ENCODE measurements at regions of chr1 and their contacts with region 1.

Region 1: DNA sequence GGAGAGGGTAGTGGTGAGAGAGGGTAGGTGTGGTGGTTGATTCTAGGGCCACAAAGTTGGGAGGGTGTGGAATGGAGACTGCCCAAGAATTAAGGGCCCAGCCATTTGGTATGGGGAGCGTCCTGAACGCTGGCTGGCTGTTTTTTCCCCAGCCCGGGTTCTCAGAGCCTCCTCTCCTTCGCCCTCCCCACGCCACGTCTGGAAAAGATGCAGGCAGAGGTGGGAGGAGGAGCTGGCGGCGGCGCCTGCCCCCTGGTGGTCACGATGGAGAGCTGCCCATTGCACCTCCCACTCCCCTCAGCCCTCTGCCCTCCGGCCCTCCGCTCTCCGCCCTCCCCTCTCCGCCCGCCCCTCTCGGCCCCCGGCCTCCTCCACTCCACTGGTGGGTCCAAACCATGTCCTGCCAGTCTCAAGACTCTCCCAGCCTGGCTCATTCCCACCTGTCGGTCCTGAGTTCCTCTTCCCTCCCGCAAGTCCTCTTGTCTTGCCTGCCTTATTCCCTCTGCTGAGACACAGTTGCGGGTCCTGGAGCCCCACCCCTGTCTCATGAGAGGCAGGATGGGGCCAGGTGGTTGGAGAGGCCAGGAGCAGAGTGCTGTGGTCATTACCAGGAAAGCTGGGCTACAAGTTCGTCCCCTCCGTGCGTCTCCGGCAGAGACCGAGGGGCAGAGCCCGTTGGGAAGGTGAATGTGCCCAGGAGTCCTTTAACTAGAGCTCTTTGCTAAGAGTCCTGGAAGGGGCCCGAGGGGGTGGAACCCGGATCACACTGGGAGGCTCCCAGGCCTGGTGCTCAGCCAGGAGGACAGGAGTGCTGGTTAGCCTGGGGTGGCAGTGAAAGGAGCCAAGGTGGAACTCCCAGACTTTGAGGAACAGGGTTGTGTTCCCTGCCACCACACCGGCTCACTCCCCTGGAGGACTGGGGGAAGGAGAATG is 22.6 kb downstream of the ETNK2 start:
- DNase-seq: no peak
- ATAC-seq: peak; percentile 93
- H3K4me3 ChIP-seq: no peak overlapping the region
- H3K27ac ChIP-seq: no peak overlapping the region
- H3K4me1 ChIP-seq: no peaks in the 10 kb centered on the region
- H3K27me3 ChIP-seq: no peaks in the 10 kb centered on the region; a peak in 1 of 4 replicates
- CTCF ChIP-seq: peak; percentile 66 to 90 (median 82)
- EP300 ChIP-seq: no peak
- POLR2A ChIP-seq: no peak
- RAD21 ChIP-seq: peak; percentile 64

Region 2: DNA sequence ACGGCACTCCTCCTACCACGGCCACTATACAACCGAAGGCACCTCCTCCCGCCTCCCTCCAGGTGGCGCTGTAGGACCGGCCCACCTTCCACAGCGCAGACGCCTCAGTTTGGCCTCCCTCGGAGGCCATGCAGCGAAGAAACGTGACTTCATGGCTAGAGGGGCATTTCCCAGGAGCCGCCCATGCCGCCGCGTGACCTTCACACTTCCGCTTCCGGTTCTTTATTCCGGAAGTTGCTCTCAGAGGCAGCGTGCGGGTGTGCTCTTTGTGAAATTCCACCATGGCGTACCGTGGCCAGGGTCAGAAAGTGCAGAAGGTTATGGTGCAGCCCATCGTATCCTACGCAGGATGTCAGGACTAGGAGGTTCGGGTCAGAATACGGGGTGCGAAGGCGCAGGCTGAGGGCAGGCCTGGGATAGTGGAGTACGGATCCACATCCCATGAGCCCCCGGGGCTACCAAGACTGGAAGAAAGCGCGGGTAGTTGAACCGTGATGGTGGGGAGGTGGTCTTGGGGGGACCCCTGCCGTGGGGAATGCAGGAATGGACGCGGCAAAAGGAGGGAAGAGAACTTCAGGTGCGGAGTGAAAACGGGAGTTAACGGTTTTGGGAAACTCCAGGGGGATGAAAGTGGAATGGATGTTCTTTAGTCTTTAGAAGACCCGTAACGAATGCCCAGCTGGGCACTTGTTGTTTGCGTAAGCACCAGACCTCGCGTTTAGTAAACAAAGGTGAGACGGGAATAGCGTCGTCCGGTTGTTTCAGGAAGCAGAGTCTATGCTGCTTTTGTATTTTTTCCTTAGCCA is 267.6 kb before region 1 on chr1 and contains the start of gene SNRPE:
- CTCF ChIA-PET with region 1: interaction called, 121 read pairs
- POLR2A ChIA-PET with region 1: no interaction called
- RAD21 ChIA-PET with region 1: interaction called, 54 read pairs
- SMC1A ChIA-PET with region 1: interaction called, 37 read pairs
- in situ Hi-C with region 1: loop called (anchors 5 kb)
- intact Hi-C with region 1: loop called (anchors 1 kb)
- DNase-seq: peak; percentile 92
- ATAC-seq: peak; percentile 97
- H3K4me3 ChIP-seq: peak within 1 kb of the TSS; percentile 80
- H3K27ac ChIP-seq: peak within 1 kb of the TSS; percentile 94
- H3K4me1 ChIP-seq: peaks cover 4% of the 10 kb centered on the region; the same call in 1 of the 2 replicates
- H3K27me3 ChIP-seq: no peaks in the 10 kb centered on the region
- CTCF ChIP-seq: peak; percentile 94 to 96 (median 94)
- EP300 ChIP-seq: no peak
- POLR2A ChIP-seq: peak; percentile 97
- RAD21 ChIP-seq: peak; percentile 89
- polyA plus RNA-seq, gene SNRPE: 1,331 to 1,384 TPM

Region 3: DNA sequence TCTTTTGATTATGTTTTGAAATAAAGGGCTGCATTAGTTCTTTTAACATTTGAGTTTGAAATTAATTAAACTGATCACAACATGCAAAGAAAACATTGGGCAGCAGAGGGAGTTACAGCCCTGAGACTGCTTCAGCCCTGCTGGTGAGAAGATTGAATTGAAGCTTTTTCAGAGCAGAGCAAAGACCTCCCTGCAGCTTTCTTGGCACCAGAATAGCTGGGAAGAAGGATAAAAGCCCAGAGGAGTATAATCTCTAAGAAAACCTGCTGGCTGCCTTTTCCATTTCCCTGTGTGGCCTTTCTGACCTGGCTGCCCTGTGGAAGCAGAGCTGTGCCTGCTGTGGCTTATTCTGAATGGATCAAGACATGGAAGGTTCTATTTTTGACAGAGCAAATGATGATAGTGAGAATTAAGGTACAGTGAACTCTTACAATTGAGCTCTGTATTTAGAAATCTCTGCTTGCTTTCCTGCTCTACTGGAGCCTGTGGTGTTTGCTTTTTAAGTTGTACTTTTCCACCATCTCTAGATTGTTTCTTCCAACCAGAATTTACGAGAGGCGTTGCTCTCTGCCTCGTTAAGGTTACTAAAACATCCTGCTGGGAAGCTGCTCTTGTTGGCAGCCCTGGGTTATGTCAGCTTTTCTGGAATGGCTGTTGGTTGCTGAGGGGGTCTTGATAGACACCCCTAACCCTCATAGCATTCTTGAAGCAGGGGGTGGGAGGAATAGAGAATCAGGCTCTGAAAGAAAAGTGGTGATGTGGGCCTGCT is 257.9 kb before region 1 on chr1:
- CTCF ChIA-PET with region 1: interaction called, 102 read pairs
- POLR2A ChIA-PET with region 1: interaction called, 4 read pairs
- RAD21 ChIA-PET with region 1: interaction called, 42 read pairs
- SMC1A ChIA-PET with region 1: interaction called, 55 read pairs
- in situ Hi-C with region 1: no loop called
- intact Hi-C with region 1: no loop called
- DNase-seq: no peak
- ATAC-seq: peak; percentile 88
- H3K4me3 ChIP-seq: no peak overlapping the region
- H3K27ac ChIP-seq: no peak overlapping the region
- H3K4me1 ChIP-seq: no peaks in the 10 kb centered on the region
- H3K27me3 ChIP-seq: no peaks in the 10 kb centered on the region
- CTCF ChIP-seq: peak; percentile 64 to 67 (median 67)
- EP300 ChIP-seq: no peak
- POLR2A ChIP-seq: no peak
- RAD21 ChIP-seq: peak; percentile 56

Region 4: GRCh38 chr1:204089044-204089751 is 40.0 kb before region 1 on chr1:
- CTCF ChIA-PET with region 1: interaction called, 6 read pairs
- POLR2A ChIA-PET with region 1: no interaction called
- RAD21 ChIA-PET with region 1: interaction called, 12 read pairs
- SMC1A ChIA-PET with region 1: no interaction called
- in situ Hi-C with region 1: no loop called
- intact Hi-C with region 1: no loop called
- DNase-seq: no peak
- ATAC-seq: no peak
- H3K4me3 ChIP-seq: no peak overlapping the region
- H3K27ac ChIP-seq: no peak overlapping the region
- H3K4me1 ChIP-seq: no peaks in the 10 kb centered on the region
- H3K27me3 ChIP-seq: no peaks in the 10 kb centered on the region; a peak in 1 of 4 replicates
- CTCF ChIP-seq: no peak
- EP300 ChIP-seq: no peak
- POLR2A ChIP-seq: no peak
- RAD21 ChIP-seq: no peak

Region 5: GRCh38 chr1:204114606-204115005 is 14.6 kb before region 1 on chr1:
- CTCF ChIA-PET with region 1: interaction called, 10 read pairs
- POLR2A ChIA-PET with region 1: no interaction called
- RAD21 ChIA-PET with region 1: interaction called, 3 read pairs
- SMC1A ChIA-PET with region 1: interaction called, 3 read pairs
- in situ Hi-C with region 1: no loop called
- intact Hi-C with region 1: no loop called
- DNase-seq: no peak
- ATAC-seq: no peak
- H3K4me3 ChIP-seq: no peak overlapping the region
- H3K27ac ChIP-seq: no peak overlapping the region
- H3K4me1 ChIP-seq: no peaks in the 10 kb centered on the region
- H3K27me3 ChIP-seq: peaks cover 0 to 1% of the 10 kb centered on the region in 2 experiments; a peak in 1 of 4 replicates
- CTCF ChIP-seq: no peak
- EP300 ChIP-seq: no peak
- POLR2A ChIP-seq: no peak
- RAD21 ChIP-seq: no peak